ENCODE measurements at regions of chr4 and their contacts with region 1.

Region 1: GRCh38 chr4:81412946-81413495 is 58.7 kb downstream of the RASGEF1B start:
- DNase-seq: no peak
- H3K4me3 ChIP-seq: no peak overlapping the region
- H3K27ac ChIP-seq: no peak overlapping the region
- H3K4me1 ChIP-seq: no peaks in the 10 kb centered on the region
- H3K27me3 ChIP-seq: no peaks in the 10 kb centered on the region
- CTCF ChIP-seq: no peak
- POLR2A ChIP-seq: no peak

Region 2: DNA sequence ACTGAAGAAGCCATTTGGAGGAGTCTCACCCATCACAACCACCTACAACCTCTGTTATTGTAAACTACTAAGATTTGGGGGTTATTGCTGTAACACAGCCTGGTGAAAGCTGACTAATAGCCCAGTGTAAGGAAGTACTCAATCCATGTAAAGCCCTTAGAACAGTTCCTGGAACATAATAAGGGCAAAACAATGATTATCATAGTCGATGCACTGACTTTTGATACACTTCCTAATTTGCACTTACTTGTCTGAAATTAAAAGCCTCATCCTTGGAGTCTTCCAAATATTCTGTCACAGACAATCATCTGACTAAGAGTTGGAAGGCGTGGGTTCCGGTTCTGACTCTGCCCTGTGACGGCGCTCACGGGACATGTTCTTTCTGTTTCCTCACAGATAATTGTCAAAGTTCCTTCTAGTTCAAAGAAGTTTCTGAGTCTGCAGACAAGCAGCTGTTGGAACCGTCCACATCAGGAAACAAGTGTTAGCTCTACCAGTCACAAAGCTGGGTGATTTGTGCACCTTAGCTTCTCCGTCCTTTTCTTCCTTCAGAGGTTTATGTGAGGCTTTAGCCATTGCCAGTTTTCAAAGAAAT is 92.1 kb after region 1 on chr4:
- intact Hi-C with region 1: no loop called
- DNase-seq: peak; percentile 48 to 88 (median 70)
- H3K4me3 ChIP-seq: no peak overlapping the region
- H3K27ac ChIP-seq: peak overlapping the region; percentile 42 to 88 (median 68)
- H3K4me1 ChIP-seq: no peaks in the 10 kb centered on the region
- H3K27me3 ChIP-seq: no peaks in the 10 kb centered on the region
- CTCF ChIP-seq: no peak
- POLR2A ChIP-seq: peak; percentile 22 to 37

Region 3: GRCh38 chr4:82201805-82202641 is 789.0 kb after region 1 on chr4:
- intact Hi-C with region 1: loop called (anchors 10 kb)
- DNase-seq: peak in 6 of 7 donors; percentile 24 to 65 (median 52)
- H3K4me3 ChIP-seq: no peak overlapping the region
- H3K27ac ChIP-seq: no peak overlapping the region
- H3K4me1 ChIP-seq: no peaks in the 10 kb centered on the region
- H3K27me3 ChIP-seq: no peaks in the 10 kb centered on the region
- CTCF ChIP-seq: peak; percentile 26 to 70 (median 62)
- POLR2A ChIP-seq: no peak